Activated T-helper 1 cell treated with anti-CD3 and anti-CD28 coated beads, Interleukin-12 subunit alpha, Interleukin-12 subunit beta, Interleukin-2, Interleukin-4 antibody, amounts not matched to agents 30 ng/mL and 10 ng/mL and 1 ng/mL, durations not matched to agents 14 hours and 24 hours and 36 hours (primary cell): ENCODE measurements at regions of chr5 and their contacts with region 1.

Region 1: GRCh38 chr5:110063640-110064602 is 374.2 kb downstream of the MAN2A1 start:
- DNase-seq: no peak
- H3K4me3 Mint-ChIP-seq: no peak overlapping the region
- H3K27ac Mint-ChIP-seq: no peak overlapping the region
- H3K4me1 Mint-ChIP-seq: peaks cover 26% of the 10 kb centered on the region
- H3K27me3 Mint-ChIP-seq: no peaks in the 10 kb centered on the region

Region 2: DNA sequence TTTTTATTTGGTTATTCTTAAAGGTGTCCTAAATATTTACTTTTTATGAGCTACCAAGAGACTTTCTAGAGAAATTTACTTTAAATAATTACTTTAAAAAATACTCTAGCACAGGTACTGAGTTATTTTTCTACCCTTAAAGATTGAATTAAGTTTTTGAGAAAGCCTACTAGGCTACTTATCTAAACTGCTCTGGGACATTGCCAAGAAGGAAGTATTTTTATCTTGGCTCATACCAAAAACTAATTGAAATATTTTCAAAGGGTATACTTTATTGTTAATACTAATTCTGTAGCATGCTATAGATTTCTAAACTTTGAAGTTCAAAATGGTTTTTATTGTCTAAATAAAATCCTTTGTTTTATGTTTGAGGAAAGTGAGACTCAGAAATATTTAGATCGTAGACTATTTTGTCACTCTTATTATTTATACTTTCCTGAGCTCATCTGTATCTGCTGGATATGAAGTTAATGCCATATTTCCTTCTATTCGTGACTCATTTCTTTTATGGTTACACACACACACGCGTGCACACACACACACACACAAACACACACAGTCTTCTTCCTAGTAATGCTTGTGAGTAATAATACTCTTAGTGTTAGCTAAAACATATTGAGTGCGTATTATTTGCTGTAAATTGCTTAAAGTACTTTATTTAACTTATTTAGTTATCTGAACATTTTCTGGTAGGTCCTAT is 284.7 kb before region 1 on chr5:
- intact Hi-C with region 1: no loop called
- DNase-seq: no peak
- H3K4me3 Mint-ChIP-seq: no peak overlapping the region
- H3K27ac Mint-ChIP-seq: no peak overlapping the region
- H3K4me1 Mint-ChIP-seq: peaks cover 6% of the 10 kb centered on the region
- H3K27me3 Mint-ChIP-seq: no peaks in the 10 kb centered on the region

Region 3: DNA sequence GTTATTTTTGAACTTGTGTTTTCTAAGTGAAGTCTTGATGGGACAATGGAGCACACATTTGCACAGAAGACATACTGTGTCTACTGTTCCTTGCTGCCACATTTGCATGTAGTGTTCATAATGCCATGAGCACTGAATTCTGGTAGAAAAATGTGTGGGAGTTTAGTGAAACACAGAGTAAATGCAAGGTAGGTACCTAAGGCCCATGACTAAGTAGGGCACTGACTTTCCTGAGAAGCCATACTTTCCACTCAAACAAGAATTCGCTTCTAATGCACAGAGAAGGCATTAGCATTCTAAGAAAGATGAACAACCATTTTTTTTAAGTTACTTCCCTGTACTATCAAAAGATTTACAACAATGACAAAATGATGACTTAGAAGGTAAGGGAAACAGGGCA is 92.0 kb before region 1 on chr5:
- intact Hi-C with region 1: no loop called
- DNase-seq: no peak
- H3K4me3 Mint-ChIP-seq: no peak overlapping the region
- H3K27ac Mint-ChIP-seq: no peak overlapping the region
- H3K4me1 Mint-ChIP-seq: no peaks in the 10 kb centered on the region
- H3K27me3 Mint-ChIP-seq: peaks cover 2% of the 10 kb centered on the region

Region 4: DNA sequence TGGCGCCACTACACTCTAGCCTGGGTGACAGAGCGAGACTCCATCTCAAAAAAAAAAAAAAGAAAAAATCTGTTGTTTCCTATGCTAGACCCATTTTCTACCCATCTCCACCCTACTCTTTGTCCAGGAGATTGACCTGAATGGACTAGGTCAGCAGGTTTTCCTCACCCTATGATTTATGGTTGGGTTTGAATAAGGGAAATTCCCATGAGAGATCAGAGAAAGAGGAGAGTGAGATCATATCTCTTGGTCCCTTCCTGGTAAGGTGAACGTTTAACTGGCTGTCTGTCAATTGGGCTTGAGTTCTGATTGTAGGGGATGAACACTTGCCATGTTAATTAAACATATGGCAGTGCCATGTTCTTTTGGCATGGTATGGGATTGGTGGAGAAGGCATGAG is 13.2 kb after region 1 on chr5:
- intact Hi-C with region 1: loop called (anchors 2 kb)
- DNase-seq: no peak
- H3K4me3 Mint-ChIP-seq: no peak overlapping the region
- H3K27ac Mint-ChIP-seq: peak overlapping the region; percentile 46
- H3K4me1 Mint-ChIP-seq: peaks cover 13% of the 10 kb centered on the region
- H3K27me3 Mint-ChIP-seq: peaks cover 2% of the 10 kb centered on the region